Activated CD8-positive, alpha-beta T cell treated with anti-CD3 and anti-CD28 coated beads for 36 hours (primary cell): ENCODE measurements at regions of chr17 and their contacts with region 1.

Region 1: DNA sequence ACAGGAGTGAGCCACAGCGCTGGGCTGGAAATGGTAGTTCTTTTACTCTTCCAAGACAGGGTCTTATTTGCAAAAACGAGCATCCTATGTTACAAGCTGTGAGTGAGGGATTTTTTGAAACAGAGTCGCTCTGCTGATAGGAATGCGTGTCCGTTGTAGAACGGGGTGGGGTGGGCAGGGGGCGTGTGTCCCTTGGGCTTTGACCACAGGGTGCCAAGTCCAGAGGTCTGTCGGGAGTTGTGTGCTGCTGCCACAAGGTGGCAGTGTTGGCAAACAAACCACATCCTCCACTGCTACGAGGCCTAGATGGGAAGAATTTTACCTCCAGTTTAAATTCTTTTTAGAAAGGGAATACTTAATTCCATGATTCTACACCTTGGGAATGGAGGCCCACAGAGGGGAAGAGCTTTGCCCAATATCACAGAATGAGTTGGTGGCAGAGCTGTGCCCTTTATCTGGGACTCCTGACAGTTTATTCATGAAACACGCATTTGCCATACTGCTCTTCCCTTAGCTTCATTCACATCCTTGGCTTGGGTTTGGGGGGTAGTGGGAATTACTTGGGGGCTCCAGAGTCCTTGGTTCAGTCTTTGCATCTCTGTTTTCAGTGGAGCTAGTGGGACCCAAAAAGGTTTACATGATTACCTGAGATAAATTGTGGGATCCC is 30.6 kb upstream of the ETV4 start:
- DNase-seq: peak; percentile 73
- ATAC-seq: peak; percentile 77
- H3K4me3 Mint-ChIP-seq: no peak overlapping the region
- H3K27ac Mint-ChIP-seq: no peak overlapping the region
- H3K4me1 Mint-ChIP-seq: peaks cover 12% of the 10 kb centered on the region
- H3K27me3 Mint-ChIP-seq: peaks cover 2% of the 10 kb centered on the region
- CTCF ChIP-seq: peak; percentile 92

Region 2: DNA sequence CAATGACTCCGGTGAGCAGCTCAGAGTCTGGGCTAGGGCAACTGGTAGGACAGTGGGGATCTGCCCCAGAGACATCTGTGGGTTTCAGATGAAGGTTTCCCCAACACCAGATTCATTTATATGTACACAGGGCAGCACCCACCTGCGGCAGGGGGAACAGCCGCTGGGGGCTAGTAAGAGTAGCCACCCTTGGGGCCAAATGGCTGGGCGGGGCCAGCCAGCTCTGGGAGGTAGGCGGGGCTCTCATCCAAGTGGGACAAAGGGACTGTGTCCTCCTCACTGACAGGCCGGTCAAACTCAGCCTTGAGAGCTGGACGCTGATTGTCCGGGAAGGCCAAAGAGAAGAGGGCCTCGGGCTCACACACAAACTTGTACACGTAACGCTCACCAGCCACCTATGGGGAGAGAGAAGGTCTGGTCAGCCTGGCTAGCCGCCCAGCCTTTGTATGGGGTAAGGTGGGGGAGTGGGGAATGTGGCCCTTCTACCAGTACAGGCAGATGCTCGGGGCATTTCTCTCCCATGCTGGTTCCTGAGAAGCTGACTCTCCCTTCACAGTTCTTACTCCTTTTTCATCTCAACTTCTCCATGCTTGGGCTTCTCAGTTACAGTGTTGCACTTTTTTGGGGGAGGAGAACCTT is 48.2 kb before region 1 on chr17:
- CTCF ChIA-PET with region 1: interaction called, 6 read pairs
- POLR2A ChIA-PET with region 1: no interaction called
- intact Hi-C with region 1: loop called (anchors 10 kb)
- DNase-seq: no peak
- ATAC-seq: no peak
- H3K4me3 Mint-ChIP-seq: no peak overlapping the region
- H3K27ac Mint-ChIP-seq: no peak overlapping the region
- H3K4me1 Mint-ChIP-seq: no peaks in the 10 kb centered on the region
- H3K27me3 Mint-ChIP-seq: no peaks in the 10 kb centered on the region
- CTCF ChIP-seq: no peak

Region 3: GRCh38 chr17:43609613-43610385 is 33.1 kb after region 1 on chr17:
- CTCF ChIA-PET with region 1: interaction called, 10 read pairs
- POLR2A ChIA-PET with region 1: no interaction called
- intact Hi-C with region 1: no loop called
- DNase-seq: no peak
- ATAC-seq: no peak
- H3K4me3 Mint-ChIP-seq: no peak overlapping the region
- H3K27ac Mint-ChIP-seq: no peak overlapping the region
- H3K4me1 Mint-ChIP-seq: peaks cover 5% of the 10 kb centered on the region
- H3K27me3 Mint-ChIP-seq: peaks cover 5% of the 10 kb centered on the region
- CTCF ChIP-seq: no peak

Region 4: GRCh38 chr17:43652124-43652480 is 75.4 kb after region 1 on chr17:
- CTCF ChIA-PET with region 1: interaction called, 14 read pairs
- POLR2A ChIA-PET with region 1: no interaction called
- intact Hi-C with region 1: no loop called
- DNase-seq: no peak
- ATAC-seq: no peak
- H3K4me3 Mint-ChIP-seq: no peak overlapping the region
- H3K27ac Mint-ChIP-seq: no peak overlapping the region
- H3K4me1 Mint-ChIP-seq: peaks cover 10% of the 10 kb centered on the region
- H3K27me3 Mint-ChIP-seq: peaks cover 7% of the 10 kb centered on the region
- CTCF ChIP-seq: no peak

Region 5: DNA sequence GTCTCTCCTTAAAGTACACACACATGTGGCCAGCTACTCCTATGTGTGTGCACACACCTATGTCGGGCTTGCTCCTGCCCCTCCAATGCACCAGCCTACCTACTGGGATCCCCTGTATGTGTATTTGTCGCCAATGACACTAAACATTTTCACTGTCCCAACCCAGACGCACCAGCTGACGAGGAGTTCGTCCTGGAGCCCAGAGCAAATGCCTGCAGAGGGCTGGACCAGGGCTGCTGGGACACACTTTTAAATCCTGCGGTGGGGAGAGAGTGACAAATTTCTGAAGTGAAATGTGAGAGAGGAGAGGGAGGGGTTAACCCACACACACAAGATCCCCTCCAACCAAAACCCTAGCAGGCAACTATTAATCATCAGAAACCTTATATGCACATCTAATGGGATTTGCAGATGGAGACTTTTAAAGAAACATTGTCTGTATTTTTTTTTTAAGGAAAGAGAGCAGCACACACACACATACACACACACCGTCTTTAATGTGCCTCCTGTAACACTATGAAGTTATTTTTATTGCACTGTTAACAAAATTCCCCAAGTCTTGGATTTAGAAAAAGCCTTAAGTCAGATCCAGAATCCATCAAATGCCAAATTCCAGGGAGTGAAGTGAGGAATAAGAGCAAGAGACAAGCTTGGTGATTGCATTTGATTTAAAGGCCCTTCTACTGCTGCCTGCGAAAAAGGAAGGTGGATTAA is 85.2 kb after region 1 on chr17 and contains the start of gene MEOX1:
- CTCF ChIA-PET with region 1: interaction called, 14 read pairs
- POLR2A ChIA-PET with region 1: no interaction called
- intact Hi-C with region 1: no loop called
- DNase-seq: peak; percentile 57
- ATAC-seq: peak; percentile 86
- H3K4me3 Mint-ChIP-seq: peak within 1 kb of the TSS; percentile 31
- H3K27ac Mint-ChIP-seq: peak within 1 kb of the TSS; percentile 39
- H3K4me1 Mint-ChIP-seq: peaks cover 25% of the 10 kb centered on the region
- H3K27me3 Mint-ChIP-seq: peaks cover 7% of the 10 kb centered on the region
- CTCF ChIP-seq: no peak
- total RNA-seq, gene MEOX1: 0.45 to 0.47 TPM

Region 6: DNA sequence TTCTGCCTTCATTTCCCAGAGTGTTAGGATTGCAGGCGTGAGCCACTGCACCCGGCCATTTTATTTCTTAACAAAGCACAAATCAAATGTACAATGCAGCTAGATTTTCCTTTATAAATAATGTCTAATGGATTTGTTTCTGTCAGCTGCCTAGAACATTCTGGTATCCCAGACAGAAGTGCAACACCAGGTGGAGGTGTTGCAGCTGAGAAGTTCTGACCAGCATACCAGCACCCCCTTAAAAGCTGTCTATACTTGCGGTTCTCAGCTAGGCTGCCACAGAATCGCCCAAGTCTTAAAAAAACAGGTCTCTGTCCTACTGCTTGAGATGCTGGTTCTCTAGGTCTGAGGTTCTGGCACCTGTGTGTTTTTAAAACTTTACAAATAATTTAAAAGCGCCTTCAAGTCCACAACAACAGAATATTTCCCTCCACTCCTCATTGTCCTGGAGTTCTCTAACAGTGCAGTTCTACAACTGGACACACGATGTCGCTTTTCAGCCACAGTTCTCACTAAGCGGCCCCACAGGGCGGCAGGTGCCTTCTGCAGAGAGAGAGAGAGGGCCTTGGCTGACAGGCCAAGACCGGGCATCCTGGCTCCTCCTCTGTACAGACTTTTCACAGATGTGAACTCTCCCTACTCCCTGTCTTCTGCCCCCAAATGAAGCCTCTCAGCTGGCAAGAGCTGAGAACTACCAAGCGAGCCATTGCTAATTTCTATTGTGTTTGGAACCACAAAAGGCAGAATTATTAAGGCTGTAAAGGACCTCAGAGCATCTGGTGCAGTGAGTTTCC is 117.6 kb after region 1 on chr17:
- CTCF ChIA-PET with region 1: interaction called, 32 read pairs
- POLR2A ChIA-PET with region 1: no interaction called
- intact Hi-C with region 1: no loop called
- DNase-seq: peak; percentile 87
- ATAC-seq: peak; percentile 100
- H3K4me3 Mint-ChIP-seq: no peak overlapping the region
- H3K27ac Mint-ChIP-seq: no peak overlapping the region
- H3K4me1 Mint-ChIP-seq: no peaks in the 10 kb centered on the region
- H3K27me3 Mint-ChIP-seq: peaks cover 7% of the 10 kb centered on the region
- CTCF ChIP-seq: peak; percentile 90